ENCODE measurements at regions of chr4 and their contacts with region 1.

Region 1: DNA sequence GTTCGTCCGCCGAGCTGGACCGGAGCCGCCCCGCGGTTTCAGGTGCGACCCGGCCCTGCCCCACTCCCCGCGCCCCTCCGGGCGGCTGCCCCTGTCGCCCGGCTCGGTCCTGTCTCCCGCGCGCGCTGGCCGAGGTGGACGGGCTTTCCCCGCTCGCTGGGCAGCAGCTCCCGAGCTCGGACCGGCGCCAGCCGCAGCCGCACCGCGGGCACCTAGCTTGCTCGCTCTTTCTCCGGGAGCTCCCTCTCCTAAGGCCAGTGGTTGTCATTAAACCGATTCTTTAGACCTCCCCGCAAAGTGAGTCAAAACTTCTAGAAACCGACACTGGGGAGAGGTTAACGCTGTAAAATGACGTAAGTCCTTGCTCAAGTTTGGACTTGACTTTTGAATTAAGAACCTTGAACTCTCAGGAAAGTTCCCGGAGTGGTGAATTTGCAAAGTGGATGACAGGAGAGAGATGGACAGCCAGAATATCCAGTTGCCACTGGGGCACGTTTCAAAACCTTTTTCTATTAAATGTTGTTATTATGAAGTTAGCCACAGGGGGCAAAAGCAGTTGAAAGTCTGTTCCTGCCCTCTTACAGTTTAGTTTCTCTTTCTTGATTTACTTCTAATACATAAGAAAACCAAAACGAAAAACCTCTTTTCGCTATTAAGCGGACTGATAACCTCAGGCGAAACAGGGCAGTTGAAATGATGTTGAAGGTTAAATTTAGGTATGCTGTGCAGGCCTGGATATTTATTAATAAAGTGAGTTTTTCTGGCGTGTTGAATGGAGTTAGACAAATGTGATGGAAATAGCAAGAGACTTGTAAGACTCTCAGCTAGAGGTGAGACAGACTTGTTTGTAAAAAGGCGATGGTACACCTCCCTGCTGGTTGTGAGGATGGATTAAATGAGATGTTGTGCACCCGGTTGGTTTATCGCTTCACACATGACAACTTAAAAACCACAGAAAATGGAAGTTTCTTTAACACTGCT is 847 bp downstream of the PI4K2B start:
- DNase-seq: peak; percentile 57
- H3K4me3 ChIP-seq: peak overlapping the region; percentile 90 to 99
- H3K27ac ChIP-seq: peak overlapping the region; percentile 97 to 98
- H3K4me1 ChIP-seq: no peaks in the 10 kb centered on the region
- H3K27me3 ChIP-seq: no peaks in the 10 kb centered on the region
- CTCF ChIP-seq: peak in 3 of 4 experiments; percentile 50 to 67 (median 59)
- POLR2A ChIP-seq: peak; percentile 42

Region 2: DNA sequence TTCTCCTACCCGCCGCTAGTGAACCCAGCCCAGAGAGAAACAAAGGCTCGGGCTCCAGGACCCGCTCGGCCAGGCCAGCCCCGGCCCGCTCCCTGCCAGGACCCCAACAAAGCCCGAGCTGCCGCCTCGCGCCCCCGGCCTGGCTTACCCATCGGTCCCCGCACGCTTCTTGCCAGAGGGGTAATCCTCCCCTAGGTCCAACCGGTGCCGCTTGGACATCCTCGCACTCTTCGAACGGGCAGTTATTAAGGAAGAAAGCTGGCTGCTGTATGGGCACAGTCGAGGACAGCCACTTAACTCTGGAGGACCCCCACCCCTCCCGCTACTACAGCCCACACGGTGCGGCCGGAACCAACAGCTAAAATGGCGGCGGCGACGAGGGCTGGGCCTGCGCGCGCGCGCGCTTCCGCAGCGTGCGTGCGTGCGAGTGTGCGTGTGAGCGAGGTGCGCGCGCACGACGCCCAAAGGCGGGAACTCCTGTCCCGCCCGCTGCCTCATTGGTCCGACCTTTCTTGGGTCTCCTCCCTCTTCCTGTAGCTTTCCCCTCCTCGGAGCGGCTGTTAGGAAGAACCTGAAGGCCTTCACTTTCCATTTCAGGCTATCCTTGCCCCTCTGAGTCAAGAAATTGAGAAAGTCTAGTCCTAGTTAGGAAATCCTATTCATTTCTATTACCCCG is 650.4 kb before region 1 on chr4 and contains the start of gene DHX15:
- intact Hi-C with region 1: loop called (anchors 5 kb)
- DNase-seq: peak; percentile 96
- H3K4me3 ChIP-seq: peak within 1 kb of the TSS; percentile 98 to 99
- H3K27ac ChIP-seq: peak within 1 kb of the TSS; percentile 96 to 97
- H3K4me1 ChIP-seq: no peaks in the 10 kb centered on the region
- H3K27me3 ChIP-seq: no peaks in the 10 kb centered on the region
- CTCF ChIP-seq: peak in 1 of 4 experiments; percentile 9
- POLR2A ChIP-seq: peak; percentile 69
- total RNA-seq, gene DHX15: 86.1 to 109 TPM

Region 3: DNA sequence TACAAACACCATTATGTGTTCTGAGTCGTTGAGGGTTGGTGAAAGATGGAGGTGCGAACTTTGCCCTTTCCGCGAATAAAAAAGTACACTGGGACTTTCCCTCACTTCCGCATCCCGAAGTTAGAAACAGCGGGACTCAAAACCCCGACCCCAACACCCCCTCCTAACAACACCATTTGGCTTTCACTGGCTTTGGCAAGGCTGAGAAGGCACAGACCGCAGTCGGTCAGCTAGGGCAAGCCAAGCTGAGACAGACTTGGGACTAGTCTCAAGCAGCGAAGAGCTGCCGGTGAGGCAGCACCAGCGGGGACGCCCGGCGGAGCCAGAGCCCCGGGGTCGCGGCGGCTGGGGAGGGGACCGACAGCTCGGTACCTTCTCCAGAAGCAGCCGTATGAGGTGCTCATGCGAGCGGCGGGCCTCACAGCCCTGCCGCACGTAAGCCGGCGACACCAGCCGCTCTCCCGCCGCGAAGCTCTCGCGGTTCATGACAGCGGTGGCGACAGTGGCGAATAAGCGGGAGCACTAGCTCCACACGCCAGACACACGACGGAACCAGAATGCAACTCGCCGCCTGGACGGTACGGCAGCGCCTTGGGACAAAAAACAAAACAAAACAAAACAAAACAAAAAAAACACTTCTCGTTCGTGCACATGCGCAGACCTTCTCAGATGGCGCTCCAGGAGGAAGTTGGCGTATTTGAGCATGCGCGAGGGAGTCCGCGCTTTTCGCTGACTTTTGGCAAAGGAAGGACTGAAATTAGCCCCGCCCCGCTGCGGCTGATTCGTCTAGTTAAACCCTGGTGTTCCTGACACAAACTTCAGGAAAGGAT is 74.6 kb before region 1 on chr4 and contains the start of gene SEPSECS:
- intact Hi-C with region 1: loop called (anchors 2 kb)
- DNase-seq: peak; percentile 98
- H3K4me3 ChIP-seq: peak within 1 kb of the TSS; percentile 84 to 90
- H3K27ac ChIP-seq: peak within 1 kb of the TSS; percentile 94 to 95
- H3K4me1 ChIP-seq: no peaks in the 10 kb centered on the region
- H3K27me3 ChIP-seq: no peaks in the 10 kb centered on the region
- CTCF ChIP-seq: peak in 1 of 4 experiments; percentile 23
- POLR2A ChIP-seq: peak; percentile 91
- total RNA-seq, gene SEPSECS: 7.4 to 12.3 TPM

Region 4: GRCh38 chr4:25172961-25173915 is 61.4 kb before region 1 on chr4:
- intact Hi-C with region 1: loop called (anchors 5 kb)
- DNase-seq: no peak
- H3K4me3 ChIP-seq: no peak overlapping the region
- H3K27ac ChIP-seq: no peak overlapping the region
- H3K4me1 ChIP-seq: no peaks in the 10 kb centered on the region
- H3K27me3 ChIP-seq: no peaks in the 10 kb centered on the region
- CTCF ChIP-seq: no peak
- POLR2A ChIP-seq: no peak

Region 5: GRCh38 chr4:25312496-25313200 is 78.0 kb after region 1 on chr4 and contains the start of gene ZCCHC4:
- intact Hi-C with region 1: loop called (anchors 5 kb)
- DNase-seq: peak; percentile 86
- H3K4me3 ChIP-seq: peak within 1 kb of the TSS; percentile 48 to 77
- H3K27ac ChIP-seq: peak within 1 kb of the TSS; percentile 54 to 71
- H3K4me1 ChIP-seq: no peaks in the 10 kb centered on the region
- H3K27me3 ChIP-seq: no peaks in the 10 kb centered on the region
- CTCF ChIP-seq: peak; percentile 86 to 98 (median 98)
- POLR2A ChIP-seq: no peak
- total RNA-seq, gene ZCCHC4: 9.4 to 17.1 TPM

Region 6: DNA sequence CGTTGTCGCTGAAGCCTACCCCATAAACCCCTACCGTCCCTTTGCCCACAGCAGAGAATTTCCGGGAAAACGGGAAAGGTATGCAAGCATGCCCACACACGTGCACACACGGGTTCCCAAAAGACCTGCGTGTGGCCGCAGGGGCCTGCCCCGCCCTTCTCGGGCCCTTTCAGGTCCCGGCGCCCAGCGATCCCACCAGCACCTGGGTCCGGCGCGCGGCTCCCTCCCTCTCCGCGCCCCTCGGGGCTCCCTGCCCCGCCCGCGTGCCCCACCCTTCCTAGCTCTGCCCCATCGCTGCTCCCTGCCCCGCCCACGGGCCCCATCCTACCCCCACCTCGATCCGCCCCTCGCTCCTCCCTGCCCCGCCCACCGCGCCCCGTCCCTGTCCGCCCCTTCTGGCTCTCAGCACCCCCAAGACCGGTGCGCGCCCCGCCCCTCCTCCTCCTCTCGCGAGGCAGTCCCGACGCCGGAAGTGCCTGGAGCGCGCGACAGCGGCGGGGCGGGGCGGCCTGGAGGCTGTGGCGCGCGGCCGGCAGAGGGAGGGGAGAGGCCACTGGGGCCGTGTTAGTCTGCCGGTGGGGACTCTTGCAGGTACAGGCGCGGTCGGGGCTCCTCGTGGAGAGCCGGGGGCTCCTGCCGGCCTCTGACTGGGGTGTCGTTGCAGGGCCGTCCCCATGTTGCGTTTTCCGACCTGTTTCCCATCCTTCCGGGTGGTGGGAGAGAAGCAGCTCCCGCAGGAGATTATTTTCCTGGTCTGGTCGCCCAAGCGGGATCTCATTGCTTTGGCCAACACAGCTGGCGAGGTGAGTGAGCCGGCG is 142.3 kb after region 1 on chr4 and contains the start of gene ANAPC4:
- intact Hi-C with region 1: loop called (anchors 10 kb)
- DNase-seq: peak; percentile 94
- H3K4me3 ChIP-seq: peak within 1 kb of the TSS; percentile 88 to 96
- H3K27ac ChIP-seq: peak within 1 kb of the TSS; percentile 76 to 79
- H3K4me1 ChIP-seq: no peaks in the 10 kb centered on the region
- H3K27me3 ChIP-seq: no peaks in the 10 kb centered on the region
- CTCF ChIP-seq: peak in 2 of 4 experiments; percentile 27 to 46
- POLR2A ChIP-seq: peak; percentile 57
- total RNA-seq, gene ANAPC4: 20.2 to 20.7 TPM

Measured in prostate gland (tissue), 2 donors.